PC-9 (cell line): ENCODE measurements at regions of chr11 and their contacts with region 1.

Region 1: DNA sequence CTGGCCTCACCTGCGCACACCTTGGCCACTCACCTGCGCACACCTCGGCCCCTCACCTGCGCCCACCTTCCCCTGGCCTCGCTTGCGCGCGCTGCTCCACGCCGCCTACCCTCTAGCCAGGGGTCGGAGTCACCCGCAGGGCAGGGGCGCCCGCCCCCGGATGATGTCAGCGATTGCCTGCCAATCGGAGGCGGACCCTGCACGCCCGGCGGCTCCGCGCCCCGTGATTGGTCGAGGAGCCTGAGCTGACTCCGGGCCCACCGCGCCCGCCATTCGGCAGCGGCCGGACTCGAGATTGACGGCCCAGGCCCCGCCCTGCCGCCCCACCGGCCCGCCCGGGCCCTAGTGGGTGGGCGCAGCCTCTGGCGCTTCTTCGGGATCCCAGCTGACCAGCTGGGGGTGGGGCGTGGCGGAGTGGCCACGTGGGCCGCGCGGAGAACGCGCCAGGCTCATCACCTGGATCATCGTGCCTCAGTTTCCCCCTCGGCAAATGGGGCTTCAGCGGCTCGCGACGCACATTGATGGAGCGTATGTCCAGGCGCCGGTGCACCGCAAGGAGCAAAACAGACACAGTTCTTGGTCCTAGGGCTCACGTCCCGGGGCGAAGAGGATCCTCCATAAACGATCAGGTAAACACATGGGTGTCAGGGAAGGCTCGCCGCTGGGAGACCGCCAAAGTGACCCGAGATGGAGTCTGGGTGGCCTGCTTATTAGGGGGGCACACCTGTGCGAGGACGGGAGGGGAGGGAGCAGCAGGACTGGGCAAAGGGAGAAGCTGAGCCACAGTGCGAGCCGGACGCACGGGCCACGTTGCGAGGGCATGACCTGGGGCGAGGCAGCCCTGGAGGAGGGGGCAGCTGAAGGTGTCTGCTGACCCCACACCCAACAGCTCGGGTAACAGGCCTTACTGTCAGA is at the start of gene DHCR7:
- DNase-seq: peak; percentile 90 to 99
- H3K4me3 ChIP-seq: peak within 1 kb of the TSS; percentile 95
- H3K27ac ChIP-seq: peak within 1 kb of the TSS; percentile 43
- H3K4me1 ChIP-seq: peaks cover 39% of the 10 kb centered on the region
- H3K27me3 ChIP-seq: no peaks in the 10 kb centered on the region
- CTCF ChIP-seq: no peak
- total RNA-seq, gene DHCR7: 118 and 311 TPM in 2 replicates

Region 2: GRCh38 chr11:70826541-70827335 is 621.8 kb before region 1 on chr11:
- CTCF ChIA-PET with region 1: interaction called, 15 read pairs
- POLR2A ChIA-PET with region 1: no interaction called
- intact Hi-C with region 1: no loop called
- DNase-seq: no peak
- H3K4me3 ChIP-seq: no peak overlapping the region
- H3K27ac ChIP-seq: no peak overlapping the region
- H3K4me1 ChIP-seq: no peaks in the 10 kb centered on the region
- H3K27me3 ChIP-seq: no peaks in the 10 kb centered on the region
- CTCF ChIP-seq: no peak

Region 3: DNA sequence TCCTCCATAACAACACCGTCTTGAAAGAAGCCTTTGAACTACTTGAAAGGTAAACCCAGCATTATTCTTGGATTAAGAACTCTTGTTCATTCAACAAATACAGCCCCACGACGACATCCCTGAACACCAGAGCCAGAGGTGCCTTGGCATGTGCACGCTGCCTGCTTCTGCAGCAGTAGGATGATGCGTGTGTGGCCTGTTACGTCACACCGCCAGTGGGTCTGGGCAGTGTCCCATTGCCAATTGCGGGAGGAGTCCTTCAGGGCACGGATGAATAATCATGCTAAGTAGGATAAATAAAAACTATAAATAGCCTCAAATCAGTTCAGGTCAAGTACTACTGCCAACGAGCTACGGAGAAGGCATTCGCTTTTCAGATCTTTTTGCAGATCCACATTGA is 576.6 kb before region 1 on chr11:
- CTCF ChIA-PET with region 1: no interaction called
- POLR2A ChIA-PET with region 1: no interaction called
- intact Hi-C with region 1: no loop called
- DNase-seq: no peak
- H3K4me3 ChIP-seq: no peak overlapping the region
- H3K27ac ChIP-seq: no peak overlapping the region
- H3K4me1 ChIP-seq: no peaks in the 10 kb centered on the region
- H3K27me3 ChIP-seq: no peaks in the 10 kb centered on the region
- CTCF ChIP-seq: no peak

Region 4: GRCh38 chr11:71425855-71426254 is 22.7 kb before region 1 on chr11:
- CTCF ChIA-PET with region 1: interaction called, 7 read pairs
- POLR2A ChIA-PET with region 1: interaction called, 10 read pairs
- intact Hi-C with region 1: loop called (anchors 1 kb)
- DNase-seq: peak; percentile 82 to 92
- H3K4me3 ChIP-seq: no peak overlapping the region
- H3K27ac ChIP-seq: no peak overlapping the region
- H3K4me1 ChIP-seq: peaks cover 18% of the 10 kb centered on the region
- H3K27me3 ChIP-seq: no peaks in the 10 kb centered on the region
- CTCF ChIP-seq: no peak

Region 5: DNA sequence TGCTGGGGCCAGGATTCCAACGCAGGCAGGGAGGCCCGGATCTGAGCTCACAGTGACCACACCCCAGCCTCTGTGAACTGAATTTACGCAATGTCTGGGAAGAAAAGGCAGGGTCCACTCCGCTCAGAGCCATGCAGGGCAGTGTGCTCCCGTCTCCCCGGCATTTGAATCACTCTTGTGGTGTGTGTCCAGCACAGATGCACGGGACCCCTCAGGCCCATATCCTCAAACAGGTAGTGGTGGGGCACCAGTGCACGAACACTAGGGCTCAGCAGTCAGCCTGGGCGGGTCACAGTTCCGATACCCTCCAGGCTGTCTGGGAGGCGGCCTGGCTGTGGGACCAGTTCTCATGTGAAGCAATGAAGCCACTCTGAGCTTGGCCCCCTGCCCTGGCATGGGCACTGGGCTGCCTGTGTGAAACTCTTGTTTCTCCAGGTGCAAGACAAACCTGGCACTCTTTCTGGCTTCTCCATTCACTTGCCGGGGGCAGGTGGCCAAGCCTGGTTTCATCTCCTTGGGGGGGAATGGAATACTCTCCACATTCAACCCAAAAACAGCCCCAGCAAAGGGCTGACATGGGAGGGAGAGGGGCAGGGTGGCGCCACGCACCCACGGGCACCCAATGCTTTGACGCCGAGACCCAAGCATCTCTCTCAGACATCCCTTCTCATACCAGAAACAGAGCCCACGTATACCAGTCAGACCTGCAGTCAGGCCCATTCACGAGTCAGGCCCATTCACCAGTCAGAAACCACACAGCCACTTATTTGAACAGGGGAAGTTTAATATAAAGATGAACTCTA is 14.7 kb before region 1 on chr11:
- CTCF ChIA-PET with region 1: no interaction called
- POLR2A ChIA-PET with region 1: interaction called, 7 read pairs
- intact Hi-C with region 1: loop called (anchors 2 kb)
- DNase-seq: peak in 1 of 2 experiments; percentile 45
- H3K4me3 ChIP-seq: no peak overlapping the region
- H3K27ac ChIP-seq: no peak overlapping the region
- H3K4me1 ChIP-seq: peaks cover 18% of the 10 kb centered on the region
- H3K27me3 ChIP-seq: no peaks in the 10 kb centered on the region
- CTCF ChIP-seq: no peak

Region 6: GRCh38 chr11:71465054-71465453 is 16.5 kb after region 1 on chr11:
- CTCF ChIA-PET with region 1: no interaction called
- POLR2A ChIA-PET with region 1: interaction called, 17 read pairs
- intact Hi-C with region 1: no loop called
- DNase-seq: no peak
- H3K4me3 ChIP-seq: no peak overlapping the region
- H3K27ac ChIP-seq: no peak overlapping the region
- H3K4me1 ChIP-seq: no peaks in the 10 kb centered on the region
- H3K27me3 ChIP-seq: no peaks in the 10 kb centered on the region
- CTCF ChIP-seq: no peak

Region 7: GRCh38 chr11:71481190-71481883 is 32.8 kb after region 1 on chr11:
- CTCF ChIA-PET with region 1: no interaction called
- POLR2A ChIA-PET with region 1: interaction called, 4 read pairs
- intact Hi-C with region 1: loop called (anchors 2 kb)
- DNase-seq: peak; percentile 67 to 88
- H3K4me3 ChIP-seq: peak overlapping the region; percentile 31; the same call in 1 of the 2 replicates
- H3K27ac ChIP-seq: peak overlapping the region; percentile 85
- H3K4me1 ChIP-seq: peaks cover 22% of the 10 kb centered on the region
- H3K27me3 ChIP-seq: no peaks in the 10 kb centered on the region
- CTCF ChIP-seq: no peak

Region 8: DNA sequence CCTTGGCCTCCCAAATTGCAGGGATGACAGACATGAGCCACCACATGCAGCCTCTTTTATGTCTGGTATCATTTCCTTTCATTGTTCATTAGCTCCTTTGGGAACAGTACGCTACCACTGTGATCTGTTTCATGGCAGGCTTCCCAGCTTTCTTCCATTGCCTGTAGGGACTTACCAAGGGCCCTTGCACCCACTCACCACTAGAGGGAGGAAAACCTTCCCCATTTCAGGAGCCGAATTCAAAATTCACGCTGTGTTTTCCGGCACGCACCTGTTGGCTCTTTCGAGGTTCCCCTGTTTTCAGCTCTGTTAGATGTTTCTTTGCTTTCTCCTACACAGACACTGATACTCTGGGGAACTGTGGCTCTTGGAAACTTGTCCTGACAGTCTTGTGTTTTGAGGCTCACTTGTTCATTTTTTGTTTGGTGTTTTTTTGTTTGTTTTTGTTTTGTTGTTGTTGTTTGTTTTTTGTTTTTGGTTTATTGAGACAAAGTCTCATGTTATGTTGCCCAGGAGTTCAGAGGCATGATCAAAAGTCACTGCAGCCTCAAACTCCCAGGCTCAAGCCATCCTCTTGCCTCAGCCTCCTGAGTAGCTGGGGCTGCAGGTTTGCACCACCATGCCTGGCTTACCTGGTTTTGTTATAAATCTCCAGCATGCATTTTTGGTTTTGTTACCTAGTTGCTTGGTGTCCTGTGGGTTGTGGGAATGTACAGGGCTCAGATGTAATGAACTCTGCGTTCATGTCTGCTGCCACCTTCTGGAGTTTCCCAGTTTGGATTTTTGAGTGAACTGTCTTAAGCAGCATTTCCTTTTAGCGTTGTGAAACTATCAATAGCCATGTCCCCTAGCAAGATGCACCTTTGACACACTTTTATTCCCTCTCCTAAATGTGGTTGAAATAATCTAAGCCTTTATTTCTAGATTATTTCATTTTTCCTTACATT is 131.8 kb after region 1 on chr11:
- CTCF ChIA-PET with region 1: interaction called, 3 read pairs
- POLR2A ChIA-PET with region 1: no interaction called
- intact Hi-C with region 1: loop called (anchors 10 kb)
- DNase-seq: peak; percentile 63 to 64
- H3K4me3 ChIP-seq: no peak overlapping the region
- H3K27ac ChIP-seq: no peak overlapping the region
- H3K4me1 ChIP-seq: peaks cover 13% of the 10 kb centered on the region
- H3K27me3 ChIP-seq: peaks cover 27% of the 10 kb centered on the region
- CTCF ChIP-seq: peak; percentile 94